CD8-positive, alpha-beta T cell (primary cell): ENCODE measurements at regions of chr12 and their contacts with region 1.

Region 1: GRCh38 chr12:47779301-47779942 is 6.4 kb downstream of the SLC48A1 start:
- DNase-seq: peak; percentile 87 to 98 (median 91)
- ATAC-seq: peak; percentile 98
- H3K4me3 ChIP-seq: no peak overlapping the region
- H3K4me3 Mint-ChIP-seq: no peak overlapping the region
- H3K27ac ChIP-seq: no peak overlapping the region
- H3K27ac Mint-ChIP-seq: no peak overlapping the region
- H3K4me1 ChIP-seq: peaks cover 8% of the 10 kb centered on the region
- H3K4me1 Mint-ChIP-seq: peaks cover 14% of the 10 kb centered on the region
- H3K27me3 ChIP-seq: no peaks in the 10 kb centered on the region
- H3K27me3 Mint-ChIP-seq: no peaks in the 10 kb centered on the region
- CTCF ChIP-seq: peak; percentile 82

Region 2: GRCh38 chr12:47032644-47033043 is 746.8 kb before region 1 on chr12:
- CTCF ChIA-PET with region 1: interaction called, 3 read pairs
- POLR2A ChIA-PET with region 1: no interaction called
- intact Hi-C with region 1: loop called in 1 of 2 experiments (anchors 10 kb)
- DNase-seq: peak in 3 of 9 experiments; percentile 13 to 82 (median 74)
- ATAC-seq: peak; percentile 72
- H3K4me3 ChIP-seq: no peak overlapping the region
- H3K4me3 Mint-ChIP-seq: no peak overlapping the region
- H3K27ac ChIP-seq: no peak overlapping the region
- H3K27ac Mint-ChIP-seq: no peak overlapping the region
- H3K4me1 ChIP-seq: peaks cover 5% of the 10 kb centered on the region
- H3K4me1 Mint-ChIP-seq: peaks cover 29% of the 10 kb centered on the region
- H3K27me3 ChIP-seq: no peaks in the 10 kb centered on the region
- H3K27me3 Mint-ChIP-seq: no peaks in the 10 kb centered on the region
- CTCF ChIP-seq: peak; percentile 74

Region 3: DNA sequence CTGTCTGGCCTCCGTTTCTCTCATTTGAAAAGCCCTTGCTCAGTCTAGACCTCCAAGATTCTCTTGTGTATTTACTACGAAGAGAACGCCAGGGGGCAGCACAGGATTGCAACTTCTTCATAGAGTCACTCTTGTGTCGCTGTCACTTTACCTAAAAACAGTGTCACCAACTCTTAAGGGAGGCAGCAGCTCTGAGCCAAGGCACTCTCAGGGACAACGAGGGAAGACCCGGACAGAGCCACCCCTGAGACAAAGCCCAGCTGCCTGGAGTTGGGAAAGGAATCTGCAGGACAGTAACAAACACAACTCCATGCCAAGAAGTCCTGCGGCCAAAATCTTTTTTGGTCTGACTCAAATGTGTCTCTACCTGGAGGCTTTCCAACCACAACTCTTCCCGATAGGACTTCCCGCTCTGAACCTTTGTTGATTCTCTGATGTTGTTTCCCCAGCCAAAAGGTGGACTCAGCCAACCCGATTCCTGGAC is 64.0 kb before region 1 on chr12:
- CTCF ChIA-PET with region 1: interaction called, 101 read pairs
- POLR2A ChIA-PET with region 1: no interaction called
- intact Hi-C with region 1: loop called (anchors 1 kb)
- DNase-seq: peak; percentile 56 to 88 (median 85)
- ATAC-seq: peak; percentile 85
- H3K4me3 ChIP-seq: no peak overlapping the region
- H3K4me3 Mint-ChIP-seq: no peak overlapping the region
- H3K27ac ChIP-seq: no peak overlapping the region
- H3K27ac Mint-ChIP-seq: no peak overlapping the region
- H3K4me1 ChIP-seq: peaks cover 17% of the 10 kb centered on the region
- H3K4me1 Mint-ChIP-seq: peaks cover 27% of the 10 kb centered on the region
- H3K27me3 ChIP-seq: no peaks in the 10 kb centered on the region
- H3K27me3 Mint-ChIP-seq: no peaks in the 10 kb centered on the region
- CTCF ChIP-seq: peak; percentile 67

Region 4: GRCh38 chr12:47767216-47767724 is 12.2 kb before region 1 on chr12:
- CTCF ChIA-PET with region 1: interaction called, 70 read pairs
- POLR2A ChIA-PET with region 1: no interaction called
- intact Hi-C with region 1: no loop called
- DNase-seq: peak; percentile 46 to 83 (median 73)
- ATAC-seq: peak; percentile 76
- H3K4me3 ChIP-seq: no peak overlapping the region
- H3K4me3 Mint-ChIP-seq: no peak overlapping the region
- H3K27ac ChIP-seq: no peak overlapping the region
- H3K27ac Mint-ChIP-seq: no peak overlapping the region
- H3K4me1 ChIP-seq: peaks cover 28% of the 10 kb centered on the region
- H3K4me1 Mint-ChIP-seq: peaks cover 23% of the 10 kb centered on the region
- H3K27me3 ChIP-seq: no peaks in the 10 kb centered on the region
- H3K27me3 Mint-ChIP-seq: no peaks in the 10 kb centered on the region
- CTCF ChIP-seq: peak; percentile 58

Region 5: DNA sequence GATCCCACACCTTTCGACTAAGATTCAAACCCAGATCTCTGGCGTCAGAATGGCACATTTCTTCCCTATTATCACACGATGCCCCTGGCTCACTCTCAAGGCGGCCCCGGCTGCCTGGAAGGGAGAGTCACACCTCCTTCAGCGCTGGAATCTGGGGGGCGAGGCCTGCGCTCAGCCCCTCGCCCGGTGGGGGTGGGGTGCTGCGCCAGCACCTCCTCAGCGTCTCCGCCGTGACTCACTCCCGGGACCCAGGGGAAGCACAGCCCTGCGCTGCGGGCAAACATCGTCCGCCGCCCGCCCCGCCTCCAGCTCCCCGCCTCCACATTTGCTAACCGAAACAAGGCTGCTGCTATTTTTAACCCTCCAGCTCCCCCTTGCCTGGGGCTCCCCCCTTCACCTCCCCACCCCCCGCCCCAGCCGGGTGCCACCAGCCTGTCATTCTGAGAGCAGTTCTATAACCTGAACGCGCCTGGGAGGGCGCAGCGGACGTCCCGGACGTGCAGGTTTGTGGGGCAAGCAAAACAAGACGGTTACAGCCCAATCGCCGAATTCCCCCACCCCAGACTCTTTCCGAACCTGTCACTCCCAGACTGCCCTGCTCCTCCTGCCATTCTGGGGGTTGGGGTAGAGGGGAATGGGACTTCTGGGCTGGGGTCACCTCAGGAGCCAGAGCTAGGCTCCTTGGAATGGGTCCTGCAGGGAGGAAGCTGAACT is 33.5 kb after region 1 on chr12:
- CTCF ChIA-PET with region 1: interaction called, 11 read pairs
- POLR2A ChIA-PET with region 1: interaction called, 3 read pairs
- intact Hi-C with region 1: loop called in 1 of 2 experiments (anchors 2 kb)
- DNase-seq: peak; percentile 77 to 95 (median 92)
- ATAC-seq: peak; percentile 73
- H3K4me3 ChIP-seq: peak overlapping the region; percentile 44 to 59
- H3K4me3 Mint-ChIP-seq: peak overlapping the region; percentile 82
- H3K27ac ChIP-seq: peak overlapping the region; percentile 65 to 73
- H3K27ac Mint-ChIP-seq: peak overlapping the region; percentile 97
- H3K4me1 ChIP-seq: peaks cover 95% of the 10 kb centered on the region
- H3K4me1 Mint-ChIP-seq: peaks cover 93% of the 10 kb centered on the region
- H3K27me3 ChIP-seq: no peaks in the 10 kb centered on the region
- H3K27me3 Mint-ChIP-seq: no peaks in the 10 kb centered on the region
- CTCF ChIP-seq: no peak

Region 6: DNA sequence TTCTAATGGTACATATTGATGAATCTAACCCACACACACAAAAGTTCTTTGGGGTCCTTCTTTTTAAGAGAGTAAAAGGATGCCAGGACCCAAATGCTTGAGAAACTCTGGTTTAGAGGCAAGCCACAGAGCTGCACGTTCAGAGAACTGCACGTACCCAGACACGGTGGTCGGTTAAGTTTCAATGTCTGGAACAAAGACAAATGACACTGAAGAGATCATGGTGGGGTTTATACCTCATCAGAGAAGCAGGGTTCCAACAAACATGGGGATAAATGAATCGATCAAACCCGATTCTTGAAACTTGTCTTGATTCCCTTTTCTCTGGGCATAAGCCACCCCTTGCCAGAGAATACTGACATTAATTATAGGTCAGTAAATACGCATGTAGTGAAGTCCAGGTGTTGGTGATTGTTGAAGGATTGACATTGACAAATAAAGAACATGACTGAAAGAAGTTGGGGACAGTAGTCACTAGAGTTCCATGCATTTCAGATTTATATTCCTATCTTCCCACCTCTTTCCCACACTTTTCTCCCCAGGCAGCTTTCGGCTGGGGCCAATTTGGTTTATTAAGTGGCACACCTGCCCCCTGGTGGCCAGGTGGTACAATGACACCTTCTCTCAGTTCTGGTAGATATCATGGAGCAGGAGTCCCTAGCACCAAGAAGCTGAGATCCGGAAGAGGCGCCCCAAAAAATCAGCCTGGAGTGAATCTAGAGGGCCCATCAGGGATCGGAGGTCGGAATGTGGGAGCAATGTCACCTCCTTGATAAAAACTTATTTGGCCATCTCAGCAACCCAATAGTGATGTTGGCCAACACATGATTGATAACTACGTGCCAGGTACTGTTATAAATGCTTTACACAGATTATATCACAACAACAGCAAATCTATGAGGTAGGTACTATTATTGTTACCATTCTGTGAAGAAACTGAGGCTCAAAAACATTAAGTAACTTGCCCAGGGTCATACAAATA is 58.1 kb after region 1 on chr12:
- CTCF ChIA-PET with region 1: interaction called, 728 read pairs
- POLR2A ChIA-PET with region 1: interaction called, 10 read pairs
- intact Hi-C with region 1: loop called in 1 of 2 experiments (anchors 1 kb)
- DNase-seq: peak; percentile 28 to 84 (median 70)
- ATAC-seq: peak; percentile 46
- H3K4me3 ChIP-seq: no peak overlapping the region
- H3K4me3 Mint-ChIP-seq: no peak overlapping the region
- H3K27ac ChIP-seq: no peak overlapping the region
- H3K27ac Mint-ChIP-seq: peak overlapping the region; percentile 65
- H3K4me1 ChIP-seq: peaks cover 51% of the 10 kb centered on the region
- H3K4me1 Mint-ChIP-seq: peaks cover 54% of the 10 kb centered on the region
- H3K27me3 ChIP-seq: no peaks in the 10 kb centered on the region
- H3K27me3 Mint-ChIP-seq: no peaks in the 10 kb centered on the region
- CTCF ChIP-seq: peak; percentile 86